ENCODE measurements at regions of chr1 and their contacts with region 1.

Region 1: GRCh38 chr1:163174524-163175437 is 27.9 kb downstream of the RGS5 start:
- DNase-seq: peak; percentile 11
- H3K4me3 Mint-ChIP-seq: no peak overlapping the region
- H3K27ac Mint-ChIP-seq: no peak overlapping the region
- H3K4me1 Mint-ChIP-seq: no peaks in the 10 kb centered on the region
- H3K27me3 Mint-ChIP-seq: peaks cover 5% of the 10 kb centered on the region

Region 2: DNA sequence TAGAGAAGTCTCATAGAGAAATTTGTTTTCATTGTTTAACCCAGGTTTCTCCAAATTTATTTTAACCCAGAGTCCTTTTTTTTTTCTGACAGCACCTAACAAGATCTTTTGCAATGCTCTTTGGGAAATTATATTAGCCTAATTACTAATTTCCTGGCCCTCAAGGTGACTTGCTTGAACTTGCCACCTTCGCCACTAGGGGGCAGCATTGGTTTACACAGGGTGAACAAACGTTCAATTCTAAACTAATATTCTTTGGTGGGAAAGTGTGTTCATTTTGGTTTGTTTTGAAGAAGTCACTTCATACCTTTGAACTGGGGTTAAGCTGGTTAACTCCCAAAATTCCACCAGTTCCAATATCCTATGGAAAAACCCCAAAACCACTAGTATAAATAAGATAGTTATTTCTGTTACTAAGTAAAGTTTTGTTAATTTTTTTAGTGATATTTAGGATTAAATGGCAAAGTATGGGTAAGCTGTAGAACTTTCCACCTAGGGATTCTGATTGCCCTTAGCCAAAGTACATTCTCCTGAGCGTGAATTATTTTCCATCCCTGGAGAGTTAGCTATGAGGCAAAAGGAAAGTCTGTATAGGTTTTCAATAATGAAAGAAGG is 326.8 kb before region 1 on chr1:
- intact Hi-C with region 1: loop called (anchors 2 kb)
- DNase-seq: peak; percentile 55
- H3K4me3 Mint-ChIP-seq: no peak overlapping the region
- H3K27ac Mint-ChIP-seq: no peak overlapping the region
- H3K4me1 Mint-ChIP-seq: no peaks in the 10 kb centered on the region
- H3K27me3 Mint-ChIP-seq: peaks cover 13% of the 10 kb centered on the region

Region 3: DNA sequence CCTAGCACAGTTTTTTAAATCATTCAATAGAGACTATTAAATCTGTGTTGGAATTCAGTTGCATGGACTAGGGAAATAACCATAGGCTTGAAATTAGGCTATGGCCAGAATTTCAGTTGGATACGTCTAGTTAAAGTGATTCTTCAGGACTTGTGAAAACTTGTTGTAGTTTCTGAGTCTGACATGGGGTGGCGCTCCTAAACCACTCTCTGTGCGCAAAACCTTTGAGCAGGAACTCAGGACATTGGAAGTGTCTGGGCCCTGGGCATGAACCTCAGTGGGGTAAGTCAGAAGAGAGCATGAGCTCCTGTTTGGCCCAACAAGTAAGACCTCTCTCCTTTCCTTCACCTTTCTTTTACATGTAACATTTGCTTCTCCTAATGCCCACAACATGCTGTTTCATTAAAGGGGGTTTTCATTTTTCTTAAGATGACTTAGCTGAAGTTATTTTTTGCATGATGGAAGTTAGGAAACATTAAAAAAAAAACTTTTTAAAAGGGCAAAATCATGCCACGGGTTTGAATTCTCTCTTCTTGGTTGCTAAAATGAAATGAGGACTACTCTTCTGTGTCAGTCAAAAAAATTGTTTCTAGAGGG is 296.7 kb before region 1 on chr1:
- intact Hi-C with region 1: loop called (anchors 2 kb)
- DNase-seq: no peak
- H3K4me3 Mint-ChIP-seq: no peak overlapping the region
- H3K27ac Mint-ChIP-seq: no peak overlapping the region
- H3K4me1 Mint-ChIP-seq: no peaks in the 10 kb centered on the region
- H3K27me3 Mint-ChIP-seq: peaks cover 25% of the 10 kb centered on the region

Region 4: GRCh38 chr1:163071405-163072255 is 103.2 kb before region 1 on chr1:
- intact Hi-C with region 1: loop called (anchors 10 kb)
- DNase-seq: peak; percentile 19
- H3K4me3 Mint-ChIP-seq: no peak overlapping the region
- H3K27ac Mint-ChIP-seq: no peak overlapping the region
- H3K4me1 Mint-ChIP-seq: no peaks in the 10 kb centered on the region
- H3K27me3 Mint-ChIP-seq: peaks cover 37% of the 10 kb centered on the region

Region 5: GRCh38 chr1:163273766-163274441 is 99.1 kb after region 1 on chr1:
- intact Hi-C with region 1: no loop called
- DNase-seq: no peak
- H3K4me3 Mint-ChIP-seq: no peak overlapping the region
- H3K27ac Mint-ChIP-seq: no peak overlapping the region
- H3K4me1 Mint-ChIP-seq: no peaks in the 10 kb centered on the region
- H3K27me3 Mint-ChIP-seq: no peaks in the 10 kb centered on the region

Region 6: GRCh38 chr1:163315773-163316374 is 141.1 kb after region 1 on chr1:
- intact Hi-C with region 1: loop called (anchors 10 kb)
- DNase-seq: no peak
- H3K4me3 Mint-ChIP-seq: no peak overlapping the region
- H3K27ac Mint-ChIP-seq: no peak overlapping the region
- H3K4me1 Mint-ChIP-seq: peaks cover 5% of the 10 kb centered on the region
- H3K27me3 Mint-ChIP-seq: no peaks in the 10 kb centered on the region